Endothelial cell of umbilical vein (primary cell): ENCODE measurements at regions of chr16 and their contacts with region 1.

Region 1: DNA sequence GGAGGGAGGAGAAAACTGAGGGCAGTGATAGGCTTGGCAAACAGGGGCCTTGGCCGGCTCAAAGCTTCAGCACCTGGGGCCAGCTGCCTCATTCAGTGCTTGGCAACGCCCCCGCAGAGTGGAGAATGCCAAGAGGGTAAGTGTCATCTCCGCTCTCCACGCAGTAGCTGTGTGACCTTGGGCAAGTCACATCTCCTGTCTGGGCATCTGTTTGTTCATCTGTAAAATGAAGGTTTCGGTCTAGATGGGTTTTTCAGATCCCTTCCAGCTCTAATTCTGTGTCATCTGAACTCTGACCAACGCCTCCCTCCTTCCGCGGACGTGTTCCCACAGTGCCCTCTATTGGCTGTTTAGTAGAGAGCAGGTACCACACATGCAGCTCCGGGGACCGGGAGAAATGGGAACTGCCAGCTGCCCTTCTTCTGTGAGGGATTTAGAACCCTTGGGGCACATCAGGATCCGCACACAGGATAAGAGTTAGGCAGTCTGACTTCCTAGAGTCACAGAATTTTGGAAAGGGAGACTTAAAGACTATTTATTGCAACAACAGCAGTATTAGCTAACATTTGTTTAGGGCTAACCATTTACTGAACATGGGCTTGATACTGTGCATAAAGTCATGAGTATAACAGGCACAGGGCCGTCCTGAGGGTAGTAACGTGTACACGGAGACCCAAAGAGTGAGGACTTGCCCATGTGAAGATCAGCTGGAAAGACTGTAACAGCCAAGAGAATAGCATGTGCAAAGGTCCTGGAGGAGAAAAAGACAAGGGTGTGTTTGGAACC is 26.8 kb downstream of the GP2 start:
- DNase-seq: peak; percentile 39
- H3K4me3 ChIP-seq: no peak overlapping the region
- H3K27ac ChIP-seq: no peak overlapping the region
- H3K4me1 ChIP-seq: no peaks in the 10 kb centered on the region
- H3K27me3 ChIP-seq: no peaks in the 10 kb centered on the region
- CTCF ChIP-seq: peak; percentile 71 to 74
- POLR2A ChIP-seq: no peak

Region 2: DNA sequence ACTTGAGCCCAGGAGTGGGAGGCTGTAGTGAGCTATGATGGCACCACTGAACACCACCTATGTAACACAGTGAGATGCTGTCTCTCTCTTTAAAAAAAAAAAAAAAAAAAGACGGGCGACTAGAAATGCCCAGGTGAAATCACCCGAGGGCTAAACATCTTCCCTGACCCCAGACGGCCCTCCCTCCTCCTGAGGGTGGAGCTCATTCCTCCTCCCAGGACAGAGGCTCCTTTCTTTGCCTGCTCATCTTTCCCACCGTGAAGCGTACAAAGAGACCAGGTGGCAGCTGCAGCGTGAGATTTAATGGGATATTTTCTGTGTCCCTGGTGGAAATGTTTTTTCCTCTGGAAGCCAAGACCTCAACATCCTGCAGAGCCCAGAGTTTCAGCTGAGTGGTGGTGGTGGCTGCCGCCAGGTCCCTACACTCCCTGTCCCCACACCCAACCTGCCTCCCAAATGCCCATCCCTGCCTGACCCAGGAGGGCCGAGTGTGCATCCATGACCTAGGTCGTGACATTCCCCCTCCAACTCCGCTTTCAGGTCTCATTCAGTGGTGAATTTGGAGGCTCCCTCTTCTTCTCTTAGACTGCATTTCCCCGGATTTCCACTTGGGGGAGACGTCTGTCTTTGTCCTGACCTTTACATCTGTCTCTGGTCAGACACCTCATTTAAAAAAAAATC is 401.4 kb before region 1 on chr16:
- CTCF ChIA-PET with region 1: interaction called, 264 read pairs
- POLR2A ChIA-PET with region 1: no interaction called
- dilution Hi-C with region 1: no loop called
- intact Hi-C with region 1: loop called (anchors 1 kb)
- DNase-seq: peak; percentile 55
- H3K4me3 ChIP-seq: no peak overlapping the region
- H3K27ac ChIP-seq: no peak overlapping the region
- H3K4me1 ChIP-seq: no peaks in the 10 kb centered on the region
- H3K27me3 ChIP-seq: no peaks in the 10 kb centered on the region
- CTCF ChIP-seq: peak; percentile 62 to 69
- POLR2A ChIP-seq: no peak

Region 3: GRCh38 chr16:19907161-19907992 is 393.1 kb before region 1 on chr16:
- CTCF ChIA-PET with region 1: interaction called, 264 read pairs
- POLR2A ChIA-PET with region 1: no interaction called
- dilution Hi-C with region 1: no loop called
- intact Hi-C with region 1: loop called (anchors 1 kb)
- DNase-seq: peak; percentile 73
- H3K4me3 ChIP-seq: no peak overlapping the region
- H3K27ac ChIP-seq: no peak overlapping the region
- H3K4me1 ChIP-seq: no peaks in the 10 kb centered on the region
- H3K27me3 ChIP-seq: no peaks in the 10 kb centered on the region
- CTCF ChIP-seq: peak; percentile 97 to 100
- POLR2A ChIP-seq: no peak

Region 4: GRCh38 chr16:19912455-19913339 is 387.8 kb before region 1 on chr16:
- CTCF ChIA-PET with region 1: interaction called, 264 read pairs
- POLR2A ChIA-PET with region 1: no interaction called
- dilution Hi-C with region 1: no loop called
- intact Hi-C with region 1: loop called (anchors 1 kb)
- DNase-seq: peak; percentile 42
- H3K4me3 ChIP-seq: no peak overlapping the region
- H3K27ac ChIP-seq: no peak overlapping the region
- H3K4me1 ChIP-seq: peaks cover 7% of the 10 kb centered on the region
- H3K27me3 ChIP-seq: no peaks in the 10 kb centered on the region
- CTCF ChIP-seq: no peak
- POLR2A ChIP-seq: no peak

Region 5: DNA sequence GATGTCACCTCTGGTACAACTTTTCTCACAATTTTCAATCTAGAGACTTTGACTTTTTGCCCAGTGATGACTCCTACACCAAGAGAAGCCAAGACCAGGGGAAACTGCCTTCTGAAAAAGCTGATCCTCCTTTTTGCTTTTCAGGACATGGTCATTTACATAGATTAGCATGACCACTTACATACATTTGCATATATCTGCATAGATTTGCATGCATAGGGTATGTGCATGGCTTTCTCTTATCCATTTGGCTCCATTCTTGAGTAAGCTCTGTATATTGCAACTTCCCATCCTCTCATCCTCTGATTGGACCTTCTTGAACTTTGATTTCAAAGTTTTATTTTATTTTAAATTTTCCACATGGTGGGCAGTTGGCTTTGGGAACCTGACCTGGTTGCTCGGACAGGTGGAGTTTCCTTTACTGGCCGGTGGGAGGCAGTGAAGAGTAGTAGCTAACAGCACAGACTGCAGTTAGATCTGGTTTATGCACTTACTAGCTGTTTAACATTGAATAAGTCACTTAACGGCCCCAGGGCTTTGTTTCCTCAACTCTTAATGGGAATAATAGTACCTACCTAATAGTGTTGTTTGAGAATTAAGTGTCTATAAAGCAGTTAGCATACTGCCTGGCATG is 319.8 kb before region 1 on chr16:
- CTCF ChIA-PET with region 1: no interaction called
- POLR2A ChIA-PET with region 1: no interaction called
- dilution Hi-C with region 1: no loop called
- intact Hi-C with region 1: loop called (anchors 10 kb)
- DNase-seq: peak; percentile 11
- H3K4me3 ChIP-seq: no peak overlapping the region
- H3K27ac ChIP-seq: no peak overlapping the region
- H3K4me1 ChIP-seq: no peaks in the 10 kb centered on the region
- H3K27me3 ChIP-seq: no peaks in the 10 kb centered on the region
- CTCF ChIP-seq: peak; percentile 44 to 46
- POLR2A ChIP-seq: no peak

Region 6: DNA sequence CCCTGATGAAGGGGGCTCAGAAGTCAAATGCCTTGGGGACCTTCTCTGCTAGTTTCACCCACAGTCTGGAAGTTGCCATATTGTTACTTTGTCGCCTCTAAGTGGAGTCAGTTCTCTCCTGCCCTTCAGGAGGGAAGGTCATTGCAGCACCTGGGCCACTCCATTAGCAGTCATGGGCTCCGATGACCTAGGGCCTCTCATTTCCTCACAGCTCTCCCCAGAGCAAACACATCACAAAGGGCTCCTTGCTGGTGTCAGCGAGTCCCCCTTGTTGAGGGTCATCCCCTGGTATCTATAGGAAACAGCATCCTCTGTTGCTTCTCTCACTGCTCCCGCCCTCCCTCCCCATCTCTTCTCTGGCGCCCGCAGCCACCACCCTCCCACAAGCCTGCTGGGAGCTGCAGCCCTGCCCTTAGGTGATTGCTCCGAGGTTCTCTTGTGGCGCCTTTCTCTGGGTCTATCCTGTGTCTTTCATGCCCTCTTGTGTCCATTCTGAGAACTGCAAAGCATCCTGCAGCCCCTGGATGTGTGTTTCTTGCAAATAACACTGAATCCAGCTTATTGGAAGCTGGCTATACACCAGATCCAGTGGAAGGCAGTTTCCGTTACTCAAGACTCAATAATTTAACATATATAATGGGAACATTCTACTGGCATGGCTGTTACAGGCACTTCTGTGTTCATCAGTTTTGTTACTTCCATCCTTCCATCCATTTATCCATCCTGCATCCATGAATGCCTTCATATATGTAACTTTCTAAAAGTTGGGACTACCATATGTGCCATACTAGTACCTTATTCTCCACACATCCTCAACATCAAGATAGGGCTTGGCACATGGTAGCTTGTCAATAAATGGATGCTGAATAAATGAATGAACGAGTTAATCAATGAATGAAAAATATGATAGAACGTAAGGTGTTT is 82.9 kb after region 1 on chr16:
- CTCF ChIA-PET with region 1: interaction called, 17 read pairs
- POLR2A ChIA-PET with region 1: no interaction called
- dilution Hi-C with region 1: no loop called
- intact Hi-C with region 1: no loop called
- DNase-seq: peak; percentile 73
- H3K4me3 ChIP-seq: no peak overlapping the region
- H3K27ac ChIP-seq: no peak overlapping the region
- H3K4me1 ChIP-seq: no peaks in the 10 kb centered on the region
- H3K27me3 ChIP-seq: no peaks in the 10 kb centered on the region
- CTCF ChIP-seq: peak; percentile 60 to 78
- POLR2A ChIP-seq: no peak